Right ventricle myocardium superior (tissue), 1 donor: ENCODE measurements at regions of chr12 and their contacts with region 1.

Region 1: DNA sequence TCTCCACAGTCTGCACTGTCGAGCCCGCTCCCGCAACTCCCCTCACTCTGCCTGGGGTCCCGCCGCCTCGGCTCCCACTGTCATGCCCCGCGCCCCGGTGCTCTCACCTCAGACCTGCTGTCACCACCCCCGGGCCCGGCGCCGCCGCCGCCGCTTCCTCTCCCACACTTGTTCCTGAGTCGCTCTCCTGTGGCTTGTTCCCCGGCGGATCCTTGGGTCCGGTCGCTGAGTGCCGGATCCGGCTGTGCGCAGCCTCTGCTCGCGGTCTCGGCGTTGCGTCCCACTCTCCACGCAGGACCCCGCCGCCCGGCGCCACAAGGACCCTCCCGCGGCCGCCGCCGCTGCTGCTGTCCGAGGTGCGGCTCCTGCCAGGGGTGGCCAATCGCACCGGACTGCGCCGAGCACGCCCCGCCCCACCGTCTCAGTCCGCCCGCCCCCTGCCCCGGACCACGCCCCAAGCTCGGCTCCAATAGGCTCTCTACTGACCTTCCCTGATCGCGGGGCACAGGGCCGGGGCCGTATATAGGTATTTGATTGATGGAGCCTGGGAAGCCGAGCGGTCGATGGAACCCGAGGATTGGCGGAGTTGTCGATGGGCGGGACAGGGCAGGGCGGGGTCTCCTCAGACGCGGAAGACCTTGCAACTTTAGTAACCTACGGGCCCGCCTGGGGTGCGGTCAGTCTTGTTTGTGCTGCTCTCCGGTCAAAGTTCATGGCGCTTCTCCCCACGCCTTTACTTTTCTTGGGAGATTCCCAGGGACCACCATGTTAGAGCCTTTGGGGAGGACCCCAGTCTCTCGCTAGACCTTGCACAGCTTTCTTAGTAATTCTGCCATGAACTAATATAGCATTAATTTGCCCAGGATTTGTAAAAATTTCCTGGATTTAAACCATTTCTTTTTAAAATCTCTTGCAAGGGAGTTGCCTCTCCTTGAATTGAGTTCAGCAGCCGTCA is at the start of gene TAOK3:
- DNase-seq: peak; percentile 99
- ATAC-seq: peak; percentile 93
- total RNA-seq, gene TAOK3: 21.8 TPM

Region 2: DNA sequence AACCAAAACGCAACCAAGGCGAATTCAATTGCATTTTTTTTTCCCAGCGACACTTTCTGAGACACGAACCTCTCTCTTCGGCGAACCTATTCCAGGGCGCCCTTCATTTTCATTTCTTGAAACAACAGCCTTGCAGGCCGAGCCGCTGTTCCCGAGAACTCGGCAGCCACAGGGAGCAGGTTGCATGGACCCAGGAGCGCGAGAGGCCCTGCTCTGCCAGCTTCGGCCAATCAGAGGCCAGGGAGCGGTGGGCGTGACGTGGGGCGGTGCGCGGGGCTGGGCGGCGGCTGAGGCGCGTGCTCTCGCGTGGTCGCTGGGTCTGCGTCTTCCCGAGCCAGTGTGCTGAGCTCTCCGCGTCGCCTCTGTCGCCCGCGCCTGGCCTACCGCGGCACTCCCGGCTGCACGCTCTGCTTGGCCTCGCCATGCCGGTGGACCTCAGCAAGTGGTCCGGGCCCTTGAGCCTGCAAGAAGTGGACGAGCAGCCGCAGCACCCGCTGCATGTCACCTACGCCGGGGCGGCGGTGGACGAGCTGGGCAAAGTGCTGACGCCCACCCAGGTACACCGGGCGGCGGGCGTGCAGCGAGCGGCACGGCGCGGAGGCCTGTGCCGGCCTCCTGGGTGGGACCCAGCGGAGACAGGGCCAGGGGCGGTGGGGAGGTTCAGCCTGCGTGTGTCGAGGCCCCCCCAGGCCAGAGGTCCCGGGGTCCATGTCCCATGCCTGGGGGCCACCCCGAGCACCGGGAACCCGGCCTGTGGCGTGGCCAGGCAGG is 236.8 kb before region 1 on chr12 and contains the start of gene PEBP1:
- intact Hi-C with region 1: loop called (anchors 10 kb)
- DNase-seq: peak; percentile 97
- ATAC-seq: peak; percentile 99
- total RNA-seq, gene PEBP1: 498 TPM

Region 3: GRCh38 chr12:118189741-118190191 is 183.1 kb before region 1 on chr12:
- intact Hi-C with region 1: loop called (anchors 5 kb)
- DNase-seq: peak; percentile 47
- ATAC-seq: peak; percentile 80